ENCODE measurements at regions of chr9 and their contacts with region 1.

Region 1: DNA sequence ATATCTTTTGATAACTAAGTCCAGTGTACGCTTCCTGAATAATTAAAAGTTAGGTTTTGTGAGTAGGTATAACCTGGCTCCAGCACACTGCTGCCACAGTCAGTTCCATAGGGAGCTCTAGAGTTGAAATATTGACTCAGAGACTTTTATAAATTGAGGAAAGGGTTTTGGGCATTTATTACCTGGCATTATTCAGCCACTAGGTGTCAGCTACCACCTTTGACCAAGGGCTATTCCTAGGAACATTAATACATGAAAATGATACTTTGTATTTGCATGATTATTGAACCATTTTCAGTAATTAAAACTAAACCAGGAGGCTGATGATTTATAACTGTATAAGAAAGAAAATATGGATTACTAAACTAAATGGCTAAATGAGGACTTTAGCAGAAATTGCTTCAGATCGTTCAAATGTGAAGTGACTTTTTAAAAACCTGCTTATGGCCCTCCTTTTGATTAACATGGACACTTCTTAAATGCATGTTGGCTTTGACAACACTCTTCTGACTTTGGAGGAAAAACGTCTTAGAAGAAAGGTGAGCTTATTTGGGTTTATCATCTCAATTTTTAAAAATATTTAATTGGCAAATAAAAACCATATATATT is 83.0 kb downstream of the SMC2 start:
- DNase-seq: no peak
- H3K4me3 ChIP-seq: no peak overlapping the region
- H3K27ac ChIP-seq: no peak overlapping the region
- H3K4me1 ChIP-seq: no peaks in the 10 kb centered on the region
- H3K27me3 ChIP-seq: no peaks in the 10 kb centered on the region
- CTCF ChIP-seq: peak; percentile 54

Region 2: GRCh38 chr9:104144336-104144735 is 32.8 kb before region 1 on chr9:
- intact Hi-C with region 1: no loop called
- DNase-seq: no peak
- H3K4me3 ChIP-seq: no peak overlapping the region
- H3K27ac ChIP-seq: no peak overlapping the region
- H3K4me1 ChIP-seq: no peaks in the 10 kb centered on the region
- H3K27me3 ChIP-seq: no peaks in the 10 kb centered on the region
- CTCF ChIP-seq: no peak

Region 3: DNA sequence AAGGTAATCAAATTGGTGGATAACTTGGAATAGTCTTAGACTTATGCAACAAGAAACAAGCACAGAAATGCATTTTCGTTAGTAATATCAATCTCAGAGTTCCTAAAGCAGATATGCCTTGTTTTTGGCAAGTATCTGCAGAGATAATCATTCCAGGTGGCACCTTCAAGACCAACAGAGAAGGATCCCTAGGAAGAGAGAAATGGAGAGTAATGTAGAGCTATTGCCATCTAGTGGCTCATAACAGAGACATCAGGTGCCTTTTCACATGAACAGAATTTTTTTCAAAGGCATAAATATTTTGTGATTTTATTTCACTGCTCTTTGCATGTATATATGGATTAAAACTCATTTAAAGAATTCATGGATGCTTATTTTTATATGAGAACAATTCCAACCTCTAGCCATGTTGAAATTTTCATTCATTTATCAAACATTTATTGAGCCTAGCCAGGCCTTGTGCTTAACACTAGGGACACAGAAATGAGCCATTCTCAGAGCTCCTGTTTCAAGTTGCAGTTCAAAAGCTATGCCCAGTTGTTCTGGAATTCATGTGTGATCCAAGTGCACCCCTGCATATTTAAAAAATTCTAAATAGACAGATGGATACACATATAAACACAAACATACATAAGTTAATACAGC is 209.4 kb after region 1 on chr9:
- intact Hi-C with region 1: loop called (anchors 10 kb)
- DNase-seq: no peak
- H3K4me3 ChIP-seq: no peak overlapping the region
- H3K27ac ChIP-seq: no peak overlapping the region
- H3K4me1 ChIP-seq: peaks cover 5% of the 10 kb centered on the region
- H3K27me3 ChIP-seq: peaks cover 9% of the 10 kb centered on the region
- CTCF ChIP-seq: peak; percentile 81

Measured in left ventricle myocardium inferior (tissue), 1 donor.